Activated CD4-positive, alpha-beta T cell treated with anti-CD3 and anti-CD28 coated beads for 36 hours (primary cell): ENCODE measurements at regions of chr9 and their contacts with region 1.

Region 1: DNA sequence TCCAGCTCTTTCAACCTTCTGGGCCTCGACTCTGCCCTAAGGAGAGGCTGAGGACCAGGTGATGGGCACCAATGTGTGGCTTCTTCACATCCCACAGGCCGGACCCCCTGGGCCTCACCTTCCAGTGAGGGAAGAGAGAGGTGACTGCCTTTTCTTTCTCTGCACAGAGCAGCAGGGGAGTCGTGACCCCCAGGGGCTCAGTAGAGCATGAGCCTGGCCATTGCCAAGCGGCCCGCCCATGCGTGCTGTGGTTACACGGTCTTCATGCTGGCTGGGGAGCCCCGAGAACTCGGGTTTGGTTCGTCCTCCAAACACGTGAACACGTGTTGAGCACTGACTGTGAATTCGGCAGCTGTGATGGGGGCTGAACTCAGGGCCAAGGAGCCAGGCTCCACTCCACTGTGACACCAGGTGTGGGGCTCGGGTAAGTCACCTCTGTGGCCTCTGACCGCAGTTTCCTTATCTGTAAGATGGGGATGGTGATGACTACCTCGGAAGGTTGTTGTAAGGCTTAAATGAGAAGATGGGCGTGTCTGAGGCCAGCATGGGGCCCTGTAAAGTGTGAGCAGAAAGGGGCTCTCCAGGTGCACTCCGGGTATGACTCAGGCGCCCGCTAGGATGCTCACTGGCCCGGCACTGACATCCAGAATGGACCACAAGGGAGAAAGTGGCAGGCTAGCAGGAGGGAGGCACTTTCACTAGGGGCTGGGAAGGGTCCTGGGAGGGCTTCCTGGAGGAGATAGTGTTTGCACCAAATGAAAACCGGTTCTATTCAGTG is 13.4 kb upstream of the GRHPR start:
- DNase-seq: peak; percentile 86
- ATAC-seq: peak; percentile 82
- H3K4me3 Mint-ChIP-seq: no peak overlapping the region
- H3K27ac Mint-ChIP-seq: no peak overlapping the region
- H3K4me1 Mint-ChIP-seq: peaks cover 31% of the 10 kb centered on the region
- H3K27me3 Mint-ChIP-seq: no peaks in the 10 kb centered on the region

Region 2: GRCh38 chr9:36924071-36924470 is 485.1 kb before region 1 on chr9:
- CTCF ChIA-PET with region 1: no interaction called
- POLR2A ChIA-PET with region 1: no interaction called
- intact Hi-C with region 1: loop called in 1 of 2 experiments (anchors 2 kb)
- DNase-seq: peak; percentile 51
- ATAC-seq: peak; percentile 85
- H3K4me3 Mint-ChIP-seq: no peak overlapping the region
- H3K27ac Mint-ChIP-seq: no peak overlapping the region
- H3K4me1 Mint-ChIP-seq: peaks cover 34% of the 10 kb centered on the region
- H3K27me3 Mint-ChIP-seq: peaks cover 35% of the 10 kb centered on the region

Region 3: DNA sequence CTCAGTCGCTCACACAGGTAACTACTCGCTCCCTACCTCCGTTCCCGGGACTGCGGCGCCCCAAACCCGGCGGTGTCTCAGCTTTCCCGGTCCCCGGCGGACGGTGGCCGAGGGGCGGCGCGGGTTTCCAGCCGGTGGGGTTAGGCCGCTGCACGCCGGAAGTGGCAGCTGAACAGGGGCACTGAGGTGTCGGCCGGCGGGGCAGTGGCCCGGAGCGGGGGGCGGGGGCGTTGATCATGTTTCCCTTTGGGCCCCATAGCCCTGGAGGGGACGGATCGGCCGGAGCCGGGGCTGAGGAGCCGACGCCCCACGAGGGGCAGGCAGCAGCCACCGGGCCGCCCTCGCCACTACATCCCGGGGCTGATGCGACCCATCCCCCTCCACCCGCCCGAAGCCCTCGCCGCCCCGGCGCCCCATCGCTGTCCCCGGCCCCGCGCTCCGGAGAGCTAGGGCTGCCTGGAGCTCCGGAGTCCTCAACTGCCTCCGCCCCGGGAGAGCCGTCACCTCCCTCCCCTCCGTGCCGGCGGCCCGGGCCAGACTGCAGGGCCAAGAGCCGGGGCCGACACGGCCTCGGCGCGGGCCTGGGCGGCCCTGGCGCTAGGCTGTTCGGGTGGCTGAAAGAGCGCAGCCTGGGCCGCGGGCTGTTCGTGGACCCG is 391.6 kb after region 1 on chr9 and contains the start of gene DCAF10:
- CTCF ChIA-PET with region 1: no interaction called
- POLR2A ChIA-PET with region 1: no interaction called
- intact Hi-C with region 1: no loop called
- DNase-seq: peak; percentile 92
- ATAC-seq: peak; percentile 78
- H3K4me3 Mint-ChIP-seq: peak within 1 kb of the TSS; percentile 90
- H3K27ac Mint-ChIP-seq: peak within 1 kb of the TSS; percentile 89
- H3K4me1 Mint-ChIP-seq: peaks cover 35% of the 10 kb centered on the region
- H3K27me3 Mint-ChIP-seq: no peaks in the 10 kb centered on the region
- total RNA-seq, gene DCAF10: 13.9 to 15.4 TPM